Activated T-helper 1 cell treated with anti-CD3 and anti-CD28 coated beads, Interleukin-12 subunit alpha, Interleukin-12 subunit beta, Interleukin-2, Interleukin-4 antibody, amounts not matched to agents 30 ng/mL and 10 ng/mL and 1 ng/mL, durations not matched to agents 14 hours and 24 hours and 36 hours (primary cell): ENCODE measurements at regions of chr19 and their contacts with region 1.

Region 1: GRCh38 chr19:58439576-58440554 is at the start of gene ZNF132:
- DNase-seq: peak; percentile 94
- H3K4me3 Mint-ChIP-seq: peak within 1 kb of the TSS; percentile 97
- H3K27ac Mint-ChIP-seq: peak within 1 kb of the TSS; percentile 98
- H3K4me1 Mint-ChIP-seq: peaks cover 24% of the 10 kb centered on the region
- H3K27me3 Mint-ChIP-seq: no peaks in the 10 kb centered on the region
- total RNA-seq, gene ZNF132: 3.4 and 3.5 TPM in 2 replicates

Region 2: DNA sequence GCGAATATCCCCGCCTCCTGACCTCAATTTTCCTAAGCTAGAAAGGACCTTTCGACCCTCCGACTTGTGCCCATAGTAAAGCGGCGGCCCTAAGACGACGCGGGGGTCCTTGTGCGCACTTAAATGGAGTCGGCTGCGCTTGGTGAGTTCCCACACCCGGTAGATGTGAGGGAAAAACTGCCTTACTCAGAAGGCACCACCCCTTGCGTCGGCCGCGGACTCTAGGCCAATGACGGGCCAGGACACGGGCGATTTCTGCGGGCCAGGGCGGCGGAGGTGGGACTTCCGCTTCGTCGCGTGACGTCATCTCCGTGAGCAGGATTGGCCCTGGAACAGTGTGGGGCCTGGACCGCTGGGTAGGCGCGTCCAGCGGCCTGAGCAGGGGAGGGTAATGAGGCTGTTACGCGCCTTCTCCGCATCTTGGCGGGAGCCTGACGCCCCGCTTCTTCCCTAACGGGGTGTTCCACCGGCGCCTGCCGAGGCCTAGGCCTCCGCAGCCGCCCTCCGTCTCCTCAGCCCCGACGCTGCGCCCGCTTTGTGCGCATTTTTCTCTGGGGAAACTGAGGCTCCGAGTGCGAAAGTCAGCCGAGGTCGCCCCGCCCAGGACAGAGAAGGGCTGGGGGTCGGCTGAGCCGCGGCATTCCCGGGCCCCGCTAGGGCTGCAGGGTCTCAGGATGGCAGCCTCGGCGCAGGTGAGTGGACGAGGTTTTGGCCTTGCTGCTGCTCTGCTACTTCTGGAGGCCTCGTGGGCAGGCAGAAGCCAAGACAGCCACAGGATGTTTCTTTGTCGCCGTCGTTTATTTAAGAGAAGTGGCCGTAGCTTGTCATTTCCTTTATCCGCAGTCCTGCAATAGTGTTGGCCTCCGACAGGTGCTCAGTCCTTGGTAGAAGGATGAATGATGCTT is 1119.4 kb before region 1 on chr19 and contains the start of gene ZNF543:
- intact Hi-C with region 1: loop called (anchors 1 kb)
- DNase-seq: peak; percentile 90
- H3K4me3 Mint-ChIP-seq: peak within 1 kb of the TSS; percentile 89
- H3K27ac Mint-ChIP-seq: peak within 1 kb of the TSS; percentile 97
- H3K4me1 Mint-ChIP-seq: peaks cover 28% of the 10 kb centered on the region
- H3K27me3 Mint-ChIP-seq: peaks cover 14% of the 10 kb centered on the region
- total RNA-seq, gene ZNF543: 5.1 and 5.4 TPM in 2 replicates

Region 3: DNA sequence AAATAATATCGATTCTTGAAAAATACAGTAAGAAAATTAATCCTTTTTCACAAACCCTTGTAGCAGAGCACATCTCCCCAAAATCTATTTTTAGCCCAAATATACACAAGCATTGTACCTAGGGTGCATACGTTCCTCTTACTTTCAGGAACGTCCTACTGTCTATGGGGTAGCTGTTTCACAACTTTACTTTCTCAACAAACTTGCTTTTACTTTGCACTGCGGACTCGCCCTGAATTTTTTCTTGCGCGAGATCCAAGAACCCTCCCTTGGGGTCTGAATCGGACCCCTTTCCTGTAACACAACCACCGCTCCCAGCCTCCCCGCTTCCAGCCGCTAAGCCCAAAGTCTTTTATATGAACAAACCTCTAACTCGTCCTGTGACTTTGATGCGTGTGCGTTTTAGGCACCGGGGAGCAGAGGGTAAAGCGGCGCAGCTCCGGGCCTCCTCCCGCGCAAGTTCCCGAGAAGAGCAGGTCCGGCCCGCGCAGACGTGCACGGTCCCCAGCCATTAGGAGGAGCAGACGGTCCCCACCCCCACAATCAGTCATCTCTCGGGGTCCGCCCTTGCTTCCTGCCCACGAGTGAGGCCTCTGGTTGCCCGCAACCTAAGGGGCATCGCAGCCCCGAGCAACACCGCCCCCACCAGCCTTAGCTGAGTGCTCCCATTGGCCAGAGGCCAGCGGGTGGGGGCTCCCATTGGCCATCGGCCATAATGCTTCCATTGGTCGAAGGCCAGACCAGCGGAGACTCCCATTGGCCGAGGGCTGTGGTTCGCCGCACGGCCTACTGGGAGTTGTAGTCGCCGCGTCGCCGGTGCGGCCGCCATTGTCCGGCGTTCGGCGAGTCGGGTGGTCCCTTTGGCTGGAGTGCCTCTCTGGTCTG is 161.5 kb before region 1 on chr19 and contains the start of gene ZNF8:
- intact Hi-C with region 1: loop called (anchors 1 kb)
- DNase-seq: peak; percentile 97
- H3K4me3 Mint-ChIP-seq: peak within 1 kb of the TSS; percentile 92
- H3K27ac Mint-ChIP-seq: peak within 1 kb of the TSS; percentile 93
- H3K4me1 Mint-ChIP-seq: peaks cover 23% of the 10 kb centered on the region
- H3K27me3 Mint-ChIP-seq: no peaks in the 10 kb centered on the region
- total RNA-seq, gene ZNF8: 4.0 and 4.4 TPM in 2 replicates

Region 4: DNA sequence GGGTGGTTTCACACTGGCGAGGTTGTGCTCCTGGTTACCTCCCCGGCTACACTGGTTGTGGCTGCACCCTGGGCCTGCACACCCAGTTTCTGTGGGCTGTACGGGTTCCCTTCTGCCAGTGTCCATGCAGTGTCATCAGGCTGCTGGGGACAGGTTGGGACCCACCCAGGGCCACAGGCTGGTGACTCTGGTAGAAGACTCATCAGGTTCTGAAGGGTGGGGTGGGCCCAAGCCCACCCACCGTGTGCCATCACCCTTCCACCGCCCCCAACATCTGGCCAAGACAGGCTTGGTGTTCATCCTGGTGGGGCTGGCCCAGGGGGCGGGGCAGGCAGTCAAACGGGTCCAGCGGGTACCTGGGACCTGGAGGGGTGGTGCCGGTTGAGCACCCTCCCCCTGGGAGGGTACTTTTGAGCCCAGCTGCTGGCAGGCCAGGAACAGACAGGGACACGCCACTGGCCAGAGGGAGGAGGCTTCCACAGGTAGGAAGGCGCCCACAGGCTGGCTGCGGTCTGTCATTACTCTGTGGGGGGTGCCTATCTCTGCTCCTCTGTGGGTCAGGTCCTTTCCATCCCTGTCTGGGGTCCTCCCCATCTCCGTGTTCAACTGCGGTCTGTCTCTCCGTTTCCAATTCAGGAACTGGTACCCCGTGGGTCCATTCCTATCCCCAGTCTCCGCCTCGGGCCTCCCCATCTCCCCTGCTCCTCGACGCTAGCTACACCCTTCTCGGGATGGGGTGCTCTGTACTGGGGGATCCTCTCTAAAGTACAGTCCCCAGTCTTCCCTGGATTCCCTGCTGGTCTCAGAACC is 44.4 kb before region 1 on chr19 and contains the start of gene RNF225:
- intact Hi-C with region 1: no loop called
- DNase-seq: no peak
- H3K4me3 Mint-ChIP-seq: no peak within 1 kb of the TSS
- H3K27ac Mint-ChIP-seq: no peak within 1 kb of the TSS
- H3K4me1 Mint-ChIP-seq: peaks cover 19% of the 10 kb centered on the region
- H3K27me3 Mint-ChIP-seq: peaks cover 5% of the 10 kb centered on the region
- total RNA-seq, gene RNF225: 0.65 and 1.6 TPM in 2 replicates

Region 5: GRCh38 chr19:58408152-58409009 is 31.5 kb before region 1 on chr19 and contains the start of gene ZNF584:
- intact Hi-C with region 1: loop called (anchors 1 kb)
- DNase-seq: peak; percentile 90
- H3K4me3 Mint-ChIP-seq: peak within 1 kb of the TSS; percentile 84
- H3K27ac Mint-ChIP-seq: peak within 1 kb of the TSS; percentile 98
- H3K4me1 Mint-ChIP-seq: peaks cover 35% of the 10 kb centered on the region
- H3K27me3 Mint-ChIP-seq: no peaks in the 10 kb centered on the region
- total RNA-seq, gene ZNF584: 17.8 and 20.6 TPM in 2 replicates

Region 6: GRCh38 chr19:58466760-58467589 is 27.1 kb after region 1 on chr19 and contains the start of gene ZNF324:
- intact Hi-C with region 1: loop called (anchors 1 kb)
- DNase-seq: peak; percentile 96
- H3K4me3 Mint-ChIP-seq: peak within 1 kb of the TSS; percentile 88
- H3K27ac Mint-ChIP-seq: peak within 1 kb of the TSS; percentile 71
- H3K4me1 Mint-ChIP-seq: peaks cover 17% of the 10 kb centered on the region
- H3K27me3 Mint-ChIP-seq: no peaks in the 10 kb centered on the region
- total RNA-seq, gene ZNF324: 12.8 and 15.5 TPM in 2 replicates

Region 7: GRCh38 chr19:58499021-58499927 is 59.4 kb after region 1 on chr19:
- intact Hi-C with region 1: loop called (anchors 1 kb)
- DNase-seq: peak; percentile 96
- H3K4me3 Mint-ChIP-seq: peak overlapping the region; percentile 91
- H3K27ac Mint-ChIP-seq: peak overlapping the region; percentile 91
- H3K4me1 Mint-ChIP-seq: peaks cover 21% of the 10 kb centered on the region
- H3K27me3 Mint-ChIP-seq: peaks cover 7% of the 10 kb centered on the region